ENCODE measurements at regions of chr3 and their contacts with region 1.

Region 1: DNA sequence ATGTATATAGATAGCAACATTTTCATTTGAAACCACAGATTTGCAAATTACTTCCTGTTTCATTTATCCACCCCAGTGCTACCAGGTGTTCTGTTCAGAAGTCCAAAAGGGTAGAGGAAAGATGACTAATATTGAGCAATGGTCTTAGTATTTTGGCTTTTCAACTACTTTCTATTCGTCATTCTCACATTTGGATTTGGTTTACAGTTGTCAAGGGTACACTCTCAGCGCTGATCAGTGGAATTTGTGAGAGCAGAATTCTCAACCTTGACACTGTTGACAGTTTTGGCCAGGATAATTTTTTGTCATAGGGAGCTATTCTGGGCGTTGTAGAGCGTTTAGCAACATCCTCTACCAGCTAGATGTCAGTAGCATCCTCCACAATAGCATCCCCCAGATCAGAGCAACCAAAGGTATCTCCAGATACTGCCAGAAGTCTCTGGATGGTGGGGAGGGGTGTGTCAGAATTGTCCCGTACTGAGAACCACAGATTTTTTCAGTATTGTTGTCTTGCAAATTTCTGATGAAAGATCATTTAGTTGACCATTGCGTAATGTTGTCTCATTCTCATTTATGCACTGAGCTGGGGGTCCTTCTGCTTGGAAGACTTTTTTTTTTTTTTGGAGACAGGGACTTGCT is 4.2 kb downstream of the HMCES start:
- DNase-seq: no peak
- H3K4me3 Mint-ChIP-seq: no peak overlapping the region
- H3K27ac Mint-ChIP-seq: peak overlapping the region; percentile 78
- H3K4me1 Mint-ChIP-seq: peaks cover 51% of the 10 kb centered on the region
- H3K27me3 Mint-ChIP-seq: no peaks in the 10 kb centered on the region

Region 2: GRCh38 chr3:129316131-129317013 is 33.5 kb after region 1 on chr3:
- CTCF ChIA-PET with region 1: interaction called, 16 read pairs
- DNase-seq: peak; percentile 92
- H3K4me3 Mint-ChIP-seq: peak overlapping the region; percentile 96
- H3K27ac Mint-ChIP-seq: peak overlapping the region; percentile 89
- H3K4me1 Mint-ChIP-seq: peaks cover 30% of the 10 kb centered on the region
- H3K27me3 Mint-ChIP-seq: peaks cover 26% of the 10 kb centered on the region

Region 3: DNA sequence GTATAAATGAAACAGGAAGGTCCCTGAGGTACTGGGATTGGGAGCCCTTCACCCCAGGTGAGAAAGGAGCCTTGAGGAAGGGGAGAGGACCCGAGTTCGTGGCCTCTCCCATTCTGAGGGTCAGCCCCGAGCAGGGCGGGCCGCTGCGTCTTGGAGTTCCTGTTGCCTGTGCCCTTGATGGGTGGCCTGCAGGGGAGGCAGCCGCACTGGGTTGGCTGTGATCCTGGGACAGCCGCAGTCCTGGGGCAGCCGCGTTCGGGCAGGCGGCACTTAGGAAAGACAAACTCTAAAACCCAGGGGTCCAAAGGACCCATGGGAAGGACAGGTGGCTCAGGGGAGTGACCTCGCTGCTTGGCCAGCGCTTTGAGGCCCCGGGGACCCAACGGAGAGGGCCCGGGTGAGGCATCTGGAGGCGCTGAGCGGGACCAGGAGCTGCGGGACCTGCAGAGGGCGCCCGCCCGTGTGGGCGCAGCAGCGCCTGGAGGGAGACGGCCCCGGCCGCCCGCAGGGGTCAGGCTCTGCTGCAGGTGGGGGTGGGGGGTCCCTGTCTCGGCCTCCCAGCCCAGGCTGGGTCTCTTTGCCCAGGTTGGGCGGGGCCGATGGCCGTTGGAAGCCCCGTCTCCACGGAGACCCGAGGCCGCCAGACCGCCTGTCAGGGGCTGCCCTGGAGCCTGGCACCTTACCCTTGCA is 60.9 kb after region 1 on chr3:
- CTCF ChIA-PET with region 1: no interaction called
- DNase-seq: peak; percentile 56
- H3K4me3 Mint-ChIP-seq: no peak overlapping the region
- H3K27ac Mint-ChIP-seq: no peak overlapping the region
- H3K4me1 Mint-ChIP-seq: peaks cover 13% of the 10 kb centered on the region
- H3K27me3 Mint-ChIP-seq: peaks cover 66% of the 10 kb centered on the region

Measured in activated naive CD4-positive, alpha-beta T cell treated with anti-CD3 and anti-CD28 coated beads, Interleukin-2, amount 10 ng/mL, durations not matched to agents 7 days and 5 days (primary cell).